ENCODE measurements at regions of chr12 and their contacts with region 1.

Region 1: DNA sequence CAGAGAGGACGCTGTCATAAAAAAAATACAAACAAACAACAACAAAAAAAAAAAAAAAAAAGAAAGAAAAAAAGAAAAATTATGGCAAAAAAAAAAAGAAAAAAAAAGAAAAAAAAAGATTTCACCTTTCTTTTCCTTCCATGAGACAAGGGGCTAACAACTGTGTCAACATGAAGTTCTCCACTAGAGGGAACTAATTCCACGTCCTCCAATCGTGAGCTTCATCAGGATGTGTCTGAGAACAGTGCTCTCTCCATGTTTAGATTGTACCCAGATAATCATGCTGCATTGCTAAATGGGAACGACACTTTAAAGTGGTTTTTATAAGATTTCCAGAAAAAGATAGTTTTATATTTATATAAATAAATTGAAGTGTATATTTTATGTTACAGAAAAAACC is 96.2 kb upstream of the PTPRB start:
- DNase-seq: peak in 1 of 2 donors; percentile 32
- ATAC-seq: peak in 4 of 8 donors; percentile 65 to 83 (median 72)
- H3K4me3 ChIP-seq: no peak overlapping the region
- H3K27ac ChIP-seq: no peak overlapping the region
- H3K4me1 ChIP-seq: no peaks in the 10 kb centered on the region
- H3K27me3 ChIP-seq: no peaks in the 10 kb centered on the region
- CTCF ChIP-seq: peak; percentile 20 to 85 (median 72)

Region 2: GRCh38 chr12:69879041-69879960 is 854.1 kb before region 1 on chr12:
- intact Hi-C with region 1: loop called in 9 of 10 experiments (anchors 2 to 10 kb)
- DNase-seq: peak; percentile 45 to 73
- ATAC-seq: peak; percentile 82 to 95 (median 94)
- H3K4me3 ChIP-seq: peak overlapping the region in 6 of 10 donors; percentile 16 to 33 (median 24)
- H3K27ac ChIP-seq: no peak overlapping the region
- H3K4me1 ChIP-seq: peaks cover 0 to 10% (median 4%) of the 10 kb centered on the region in 9 donors
- H3K27me3 ChIP-seq: no peaks in the 10 kb centered on the region
- CTCF ChIP-seq: peak; percentile 78 to 97 (median 90)

Region 3: DNA sequence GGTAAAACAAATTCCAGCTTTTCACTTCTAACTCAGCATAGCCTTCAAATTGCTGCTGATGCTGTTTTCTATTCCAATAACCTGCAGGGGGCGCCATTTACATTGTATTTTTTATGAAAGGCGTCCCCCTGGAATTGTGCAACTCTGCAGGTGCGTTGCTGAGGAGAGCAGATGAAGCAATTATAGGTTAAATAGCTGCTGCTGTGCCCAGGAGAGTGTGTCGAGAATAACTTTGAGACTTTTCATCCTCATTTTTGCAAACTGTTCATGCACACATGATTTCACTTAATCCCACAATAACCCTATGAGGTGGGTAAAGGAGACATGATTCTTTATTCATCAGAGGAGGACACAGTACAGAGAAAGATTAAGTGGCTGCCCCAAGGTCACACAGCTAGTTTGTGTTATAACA is 832.7 kb before region 1 on chr12:
- intact Hi-C with region 1: loop called in 2 of 10 experiments (anchors 2 to 10 kb)
- DNase-seq: peak in 1 of 2 donors; percentile 85
- ATAC-seq: peak in 7 of 8 donors; percentile 35 to 79 (median 59)
- H3K4me3 ChIP-seq: no peak overlapping the region
- H3K27ac ChIP-seq: peak overlapping the region in 1 of 10 donors; percentile 9
- H3K4me1 ChIP-seq: peaks cover 0 to 23% (median 13%) of the 10 kb centered on the region in 9 donors
- H3K27me3 ChIP-seq: no peaks in the 10 kb centered on the region
- CTCF ChIP-seq: peak; percentile 79 to 92 (median 86)

Region 4: GRCh38 chr12:70242695-70243509 is 490.5 kb before region 1 on chr12 and contains the start of gene CNOT2:
- intact Hi-C with region 1: loop called in 1 of 10 experiments (anchors 5 kb)
- DNase-seq: peak; percentile 90 to 92
- ATAC-seq: peak; percentile 96 to 99 (median 97)
- H3K4me3 ChIP-seq: peak within 1 kb of the TSS; percentile 65 to 96 (median 88)
- H3K27ac ChIP-seq: peak within 1 kb of the TSS; percentile 89 to 99 (median 96)
- H3K4me1 ChIP-seq: peaks cover 7 to 61% (median 43%) of the 10 kb centered on the region in 9 donors
- H3K27me3 ChIP-seq: no peaks in the 10 kb centered on the region
- CTCF ChIP-seq: peak in 1 of 9 donors; percentile 14
- total RNA-seq, gene CNOT2: 29.7 to 43.0 (median 36.4) TPM

Region 5: GRCh38 chr12:70645494-70646317 is 87.7 kb before region 1 on chr12:
- intact Hi-C with region 1: no loop called
- DNase-seq: peak; percentile 41 to 67
- ATAC-seq: peak; percentile 84 to 96 (median 95)
- H3K4me3 ChIP-seq: peak overlapping the region in 2 of 10 donors; percentile 16 to 19
- H3K27ac ChIP-seq: peak overlapping the region; percentile 0 to 85 (median 56)
- H3K4me1 ChIP-seq: peaks cover 6 to 67% (median 43%) of the 10 kb centered on the region in 9 donors
- H3K27me3 ChIP-seq: no peaks in the 10 kb centered on the region
- CTCF ChIP-seq: no peak

Region 6: GRCh38 chr12:70849265-70849960 is 116.0 kb after region 1 on chr12:
- intact Hi-C with region 1: loop called in 9 of 10 experiments (anchors 1 to 5 kb)
- DNase-seq: no peak
- ATAC-seq: peak in 6 of 8 donors; percentile 25 to 76 (median 60)
- H3K4me3 ChIP-seq: no peak overlapping the region
- H3K27ac ChIP-seq: no peak overlapping the region
- H3K4me1 ChIP-seq: peaks cover 0 to 10% (median 0%) of the 10 kb centered on the region in 9 donors
- H3K27me3 ChIP-seq: no peaks in the 10 kb centered on the region
- CTCF ChIP-seq: peak in 7 of 9 donors; percentile 30 to 64 (median 46)

Region 7: GRCh38 chr12:71014180-71014785 is 280.9 kb after region 1 on chr12:
- intact Hi-C with region 1: loop called in 8 of 10 experiments (anchors 5 to 10 kb)
- DNase-seq: no peak
- ATAC-seq: peak in 3 of 8 donors; percentile 25 to 52 (median 44)
- H3K4me3 ChIP-seq: no peak overlapping the region
- H3K27ac ChIP-seq: no peak overlapping the region
- H3K4me1 ChIP-seq: peaks cover 0 to 8% (median 0%) of the 10 kb centered on the region in 9 donors
- H3K27me3 ChIP-seq: no peaks in the 10 kb centered on the region
- CTCF ChIP-seq: peak in 8 of 9 donors; percentile 21 to 43 (median 34)

Region 8: GRCh38 chr12:71128191-71128788 is 394.9 kb after region 1 on chr12:
- intact Hi-C with region 1: no loop called
- DNase-seq: no peak
- ATAC-seq: no peak
- H3K4me3 ChIP-seq: no peak overlapping the region
- H3K27ac ChIP-seq: no peak overlapping the region
- H3K4me1 ChIP-seq: no peaks in the 10 kb centered on the region
- H3K27me3 ChIP-seq: peaks cover 0 to 3% (median 0%) of the 10 kb centered on the region in 7 donors
- CTCF ChIP-seq: no peak

Region 9: DNA sequence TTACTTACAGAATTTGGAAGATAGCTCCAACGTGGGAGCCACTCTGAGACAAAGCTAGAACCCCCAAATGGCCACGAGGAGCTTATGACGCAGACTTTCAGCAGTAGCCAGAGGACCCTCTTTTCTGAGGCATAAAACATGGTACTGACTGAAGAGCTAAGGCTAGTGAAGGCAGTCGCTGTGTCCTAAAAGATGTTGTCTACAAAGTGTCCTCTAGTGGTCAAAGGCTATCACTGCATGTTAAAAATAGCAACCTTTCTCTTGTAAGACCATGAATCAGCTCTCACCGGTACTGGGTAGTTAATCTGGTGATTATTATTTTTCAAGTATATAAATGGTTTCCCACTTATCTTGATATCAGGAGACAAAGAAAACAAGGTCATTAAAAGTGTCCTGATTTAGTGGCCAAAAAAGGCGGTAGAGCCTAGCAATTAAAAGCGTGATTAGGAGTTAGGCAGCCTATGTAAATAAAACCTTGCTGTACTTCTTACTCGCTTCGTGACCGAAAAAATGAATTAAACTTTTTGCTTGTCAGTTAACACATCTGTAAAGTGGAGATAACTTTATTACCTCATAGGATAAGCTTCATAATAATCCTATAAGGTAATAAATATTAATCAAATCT is 659.2 kb after region 1 on chr12:
- intact Hi-C with region 1: loop called in 1 of 10 experiments (anchors 10 kb)
- DNase-seq: peak in 1 of 2 donors; percentile 5
- ATAC-seq: peak in 6 of 8 donors; percentile 47 to 78 (median 70)
- H3K4me3 ChIP-seq: no peak overlapping the region
- H3K27ac ChIP-seq: no peak overlapping the region
- H3K4me1 ChIP-seq: no peaks in the 10 kb centered on the region
- H3K27me3 ChIP-seq: peaks cover 0 to 4% (median 0%) of the 10 kb centered on the region in 7 donors
- CTCF ChIP-seq: peak; percentile 43 to 85 (median 71)